Astrocyte of the cerebellum (primary cell): ENCODE measurements at regions of chr1 and their contacts with region 1.

Region 1: DNA sequence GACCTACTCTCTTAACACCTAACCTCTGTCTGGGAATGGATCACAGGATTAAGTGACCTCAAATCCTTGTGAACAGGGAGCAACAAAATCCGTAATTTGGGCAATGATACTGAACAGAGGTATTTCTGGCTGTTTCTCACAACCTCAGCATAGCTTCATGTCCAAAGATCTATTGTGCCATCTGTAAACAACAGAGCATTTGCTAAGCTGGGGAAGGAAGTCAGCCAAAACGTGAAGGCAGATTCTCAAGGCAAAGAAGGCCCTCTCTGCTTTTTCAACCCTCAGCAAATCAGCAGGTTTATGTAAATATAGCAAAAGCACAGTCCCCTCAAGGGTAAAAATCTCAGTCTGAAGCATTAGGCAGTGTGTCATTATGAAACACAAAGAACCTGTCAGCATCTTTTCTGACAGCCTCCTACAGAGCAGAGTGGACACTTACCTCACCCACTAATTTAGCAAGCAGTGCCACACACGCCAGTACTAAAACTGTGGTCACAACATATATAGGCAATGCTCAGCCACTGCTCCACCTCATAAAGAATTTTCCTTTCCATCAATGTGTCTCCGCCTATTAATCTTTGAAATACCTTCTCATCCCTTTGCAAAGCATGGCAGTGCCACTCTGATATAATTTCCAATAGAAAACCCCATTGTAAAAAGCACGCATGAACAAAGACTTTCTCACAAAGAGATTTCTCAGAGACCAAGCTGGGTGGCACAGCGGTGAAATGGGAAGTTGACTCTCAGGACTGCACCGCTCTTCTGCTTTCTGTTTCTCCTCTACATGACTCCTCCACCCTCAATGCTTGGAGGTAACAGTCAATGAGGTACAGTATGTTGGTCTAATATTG is 188.0 kb downstream of the RERE start:
- DNase-seq: no peak
- H3K4me3 ChIP-seq: no peak overlapping the region
- CTCF ChIP-seq: no peak

Region 2: GRCh38 chr1:8660411-8660828 is 31.0 kb after region 1 on chr1:
- in situ Hi-C with region 1: loop called (anchors 5 kb)
- DNase-seq: peak; percentile 39
- H3K4me3 ChIP-seq: no peak overlapping the region
- CTCF ChIP-seq: no peak

Region 3: GRCh38 chr1:8679395-8679800 is 49.9 kb after region 1 on chr1:
- in situ Hi-C with region 1: no loop called
- DNase-seq: no peak
- H3K4me3 ChIP-seq: no peak overlapping the region
- CTCF ChIP-seq: no peak